CD14-positive monocyte (primary cell): ENCODE measurements at regions of chr10 and their contacts with region 1.

Region 1: GRCh38 chr10:11165591-11166543 is 148.2 kb downstream of the CELF2 start:
- DNase-seq: peak; percentile 60 to 69 (median 68)
- H3K4me3 ChIP-seq: peak overlapping the region; percentile 90 to 96 (median 94)
- H3K4me3 Mint-ChIP-seq: no peak overlapping the region
- H3K27ac ChIP-seq: peak overlapping the region; percentile 91 to 95
- H3K27ac Mint-ChIP-seq: peak overlapping the region in 6 of 7 donors; percentile 93 to 99 (median 98)
- H3K4me1 ChIP-seq: peaks cover 72 to 86% of the 10 kb centered on the region in 2 donors
- H3K4me1 Mint-ChIP-seq: peaks cover 37% of the 10 kb centered on the region
- H3K27me3 ChIP-seq: no peaks in the 10 kb centered on the region
- H3K27me3 Mint-ChIP-seq: peaks cover 0 to 5% (median 0%) of the 10 kb centered on the region in 3 donors
- CTCF ChIP-seq: peak; percentile 75

Region 2: GRCh38 chr10:11113156-11113555 is 52.7 kb before region 1 on chr10:
- intact Hi-C with region 1: loop called in 1 of 2 experiments (anchors 5 kb)
- DNase-seq: peak; percentile 22 to 50 (median 30)
- H3K4me3 ChIP-seq: no peak overlapping the region
- H3K4me3 Mint-ChIP-seq: no peak overlapping the region
- H3K27ac ChIP-seq: no peak overlapping the region
- H3K27ac Mint-ChIP-seq: no peak overlapping the region
- H3K4me1 ChIP-seq: peaks cover 2 to 5% of the 10 kb centered on the region in 2 donors
- H3K4me1 Mint-ChIP-seq: peaks cover 7% of the 10 kb centered on the region
- H3K27me3 ChIP-seq: no peaks in the 10 kb centered on the region
- H3K27me3 Mint-ChIP-seq: peaks cover 0 to 2% (median 0%) of the 10 kb centered on the region in 3 donors
- CTCF ChIP-seq: peak; percentile 78

Region 3: DNA sequence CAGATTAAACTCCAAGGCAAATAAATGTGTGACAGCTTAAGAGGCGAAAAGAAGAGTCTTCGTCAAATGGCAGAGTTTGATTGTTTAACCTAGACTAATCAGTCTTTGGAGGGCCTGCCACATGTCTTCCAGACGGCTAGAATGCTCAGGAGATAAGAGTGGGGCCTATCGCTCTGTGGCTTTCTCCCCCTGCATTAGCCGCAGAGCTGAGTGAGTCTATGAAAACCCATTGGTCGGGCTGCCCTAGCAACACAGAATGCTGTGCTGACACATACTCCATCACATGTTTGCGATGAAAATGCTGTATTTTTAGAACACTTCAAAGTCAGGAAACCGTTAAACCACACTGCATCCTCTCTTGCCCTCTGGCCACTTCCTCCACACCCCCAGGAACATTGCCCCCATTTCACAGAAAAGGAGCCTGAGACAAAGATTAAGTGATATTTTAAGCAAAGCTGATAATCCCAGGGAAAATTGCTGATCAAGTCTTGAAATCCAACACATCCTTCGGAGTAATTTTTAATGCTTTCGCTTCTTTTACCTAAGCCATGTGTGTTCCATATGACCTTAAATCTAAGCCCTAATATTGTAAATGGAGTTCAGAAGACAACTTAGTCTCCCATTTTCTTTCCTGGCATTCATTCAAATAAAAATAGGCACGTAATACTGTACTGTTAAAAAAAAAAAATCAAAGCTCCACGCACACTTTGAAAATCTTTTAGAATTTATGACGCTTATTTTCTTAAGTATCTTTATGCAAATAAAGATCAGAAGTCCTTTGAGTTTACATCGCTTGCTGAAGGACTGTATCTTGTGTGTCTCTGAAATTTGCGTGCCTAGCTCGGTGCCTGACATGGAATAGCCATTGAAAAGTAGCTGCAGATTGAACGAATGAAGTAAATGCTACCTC is 13.0 kb after region 1 on chr10:
- intact Hi-C with region 1: loop called in 1 of 2 experiments (anchors 1 kb)
- DNase-seq: peak; percentile 56 to 83 (median 74)
- H3K4me3 ChIP-seq: peak overlapping the region in 1 of 3 experiments; percentile 58
- H3K4me3 Mint-ChIP-seq: peak overlapping the region; percentile 57 to 81
- H3K27ac ChIP-seq: peak overlapping the region; percentile 74 to 91
- H3K27ac Mint-ChIP-seq: peak overlapping the region; percentile 92 to 97 (median 95)
- H3K4me1 ChIP-seq: peaks cover 95 to 100% of the 10 kb centered on the region in 2 donors
- H3K4me1 Mint-ChIP-seq: peaks cover 77% of the 10 kb centered on the region
- H3K27me3 ChIP-seq: no peaks in the 10 kb centered on the region
- H3K27me3 Mint-ChIP-seq: peaks cover 0 to 1% (median 0%) of the 10 kb centered on the region in 3 donors
- CTCF ChIP-seq: no peak

Region 4: DNA sequence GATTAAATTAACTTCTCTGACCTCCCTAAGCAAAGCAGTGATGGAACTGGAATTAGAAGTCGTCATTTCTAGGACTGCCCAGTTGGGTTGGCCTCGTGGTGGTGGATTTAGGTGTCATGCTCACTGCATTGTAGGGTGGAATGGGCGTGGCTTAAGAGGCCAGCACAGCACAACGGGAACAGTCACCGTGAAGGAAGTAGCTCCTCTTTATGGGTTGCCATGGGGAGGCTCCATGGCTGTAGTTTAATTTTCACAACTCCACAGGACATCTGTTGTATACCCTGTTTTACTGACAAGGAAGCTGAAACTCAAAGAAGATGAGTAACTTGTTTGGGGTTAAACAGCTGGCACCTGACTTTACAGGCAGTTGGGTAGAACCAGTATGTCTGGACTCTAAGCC is 60.1 kb after region 1 on chr10:
- intact Hi-C with region 1: loop called in 1 of 2 experiments (anchors 5 kb)
- DNase-seq: peak; percentile 88 to 91 (median 91)
- H3K4me3 ChIP-seq: peak overlapping the region in 1 of 3 experiments; percentile 14
- H3K4me3 Mint-ChIP-seq: no peak overlapping the region
- H3K27ac ChIP-seq: peak overlapping the region; percentile 72 to 84
- H3K27ac Mint-ChIP-seq: peak overlapping the region; percentile 83 to 96 (median 92)
- H3K4me1 ChIP-seq: peaks cover 27 to 30% of the 10 kb centered on the region in 2 donors
- H3K4me1 Mint-ChIP-seq: peaks cover 51% of the 10 kb centered on the region
- H3K27me3 ChIP-seq: no peaks in the 10 kb centered on the region
- H3K27me3 Mint-ChIP-seq: no peaks in the 10 kb centered on the region
- CTCF ChIP-seq: no peak